Activated CD8-positive, alpha-beta T cell treated with anti-CD3 and anti-CD28 coated beads, Interleukin-2, amount 10 ng/mL, durations not matched to agents 7 days and 5 days (primary cell): ENCODE measurements at regions of chr14 and their contacts with region 1.

Region 1: DNA sequence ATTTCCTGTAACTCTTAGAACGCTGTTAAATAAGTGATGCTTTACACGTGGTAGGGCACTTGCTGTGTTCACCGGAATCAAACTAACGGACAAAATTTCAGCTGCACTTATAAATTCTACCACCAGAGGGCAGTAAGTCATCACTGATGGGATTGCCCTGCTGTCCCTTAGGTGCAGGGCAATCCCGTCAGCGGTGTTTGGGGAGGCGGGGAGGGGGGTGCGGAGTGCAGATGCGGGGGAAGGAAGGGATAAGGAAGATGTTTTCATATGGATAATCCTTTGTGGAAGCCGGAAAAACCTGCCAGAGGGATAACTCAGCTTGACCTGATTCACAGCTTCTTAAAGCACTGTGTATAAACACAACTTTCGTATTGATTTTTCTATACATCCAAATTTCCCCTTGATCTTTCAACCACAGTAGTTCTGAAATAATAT is 21.7 kb upstream of the SLC10A1 start:
- DNase-seq: peak; percentile 75
- ATAC-seq: peak; percentile 82
- H3K4me3 Mint-ChIP-seq: no peak overlapping the region
- H3K27ac Mint-ChIP-seq: no peak overlapping the region
- H3K4me1 Mint-ChIP-seq: peaks cover 3% of the 10 kb centered on the region
- H3K27me3 Mint-ChIP-seq: peaks cover 12% of the 10 kb centered on the region

Region 2: GRCh38 chr14:69794791-69795190 is 24.0 kb before region 1 on chr14:
- CTCF ChIA-PET with region 1: no interaction called
- POLR2A ChIA-PET with region 1: no interaction called
- DNase-seq: no peak
- ATAC-seq: no peak
- H3K4me3 Mint-ChIP-seq: no peak overlapping the region
- H3K27ac Mint-ChIP-seq: no peak overlapping the region
- H3K4me1 Mint-ChIP-seq: no peaks in the 10 kb centered on the region
- H3K27me3 Mint-ChIP-seq: no peaks in the 10 kb centered on the region

Region 3: GRCh38 chr14:69863083-69863482 is 44.3 kb after region 1 on chr14:
- CTCF ChIA-PET with region 1: no interaction called
- POLR2A ChIA-PET with region 1: no interaction called
- DNase-seq: no peak
- ATAC-seq: no peak
- H3K4me3 Mint-ChIP-seq: no peak overlapping the region
- H3K27ac Mint-ChIP-seq: no peak overlapping the region
- H3K4me1 Mint-ChIP-seq: no peaks in the 10 kb centered on the region
- H3K27me3 Mint-ChIP-seq: peaks cover 9% of the 10 kb centered on the region

Region 4: DNA sequence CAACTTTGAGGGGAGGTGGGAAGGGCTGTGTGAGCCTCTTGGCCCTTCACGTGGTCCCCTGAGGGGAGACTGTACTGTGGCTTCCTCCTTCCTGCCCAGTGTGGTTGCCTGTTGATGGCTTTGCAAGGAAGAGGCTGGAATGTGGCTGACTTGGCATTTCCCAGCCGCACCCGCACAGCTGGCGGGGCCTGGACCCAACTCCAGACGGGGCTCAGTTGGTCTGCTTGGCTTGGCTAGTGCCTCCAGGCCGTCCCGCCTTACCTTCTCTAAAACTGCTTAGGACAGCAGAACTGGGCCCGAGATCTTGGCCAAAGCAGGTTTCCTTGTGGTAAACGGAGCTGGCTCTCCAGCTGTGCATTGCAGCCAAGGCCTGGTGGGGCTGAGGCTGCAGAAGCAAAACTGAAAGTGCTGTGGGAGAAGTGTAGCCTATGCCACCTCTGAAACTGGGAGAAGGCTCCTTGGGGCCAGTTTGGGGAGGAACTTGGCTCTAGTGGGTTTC is 200.0 kb after region 1 on chr14:
- CTCF ChIA-PET with region 1: interaction called, 12 read pairs
- POLR2A ChIA-PET with region 1: no interaction called
- DNase-seq: peak; percentile 41
- ATAC-seq: peak; percentile 74
- H3K4me3 Mint-ChIP-seq: peak overlapping the region; percentile 6
- H3K27ac Mint-ChIP-seq: no peak overlapping the region
- H3K4me1 Mint-ChIP-seq: peaks cover 19% of the 10 kb centered on the region
- H3K27me3 Mint-ChIP-seq: peaks cover 15% of the 10 kb centered on the region

Region 5: DNA sequence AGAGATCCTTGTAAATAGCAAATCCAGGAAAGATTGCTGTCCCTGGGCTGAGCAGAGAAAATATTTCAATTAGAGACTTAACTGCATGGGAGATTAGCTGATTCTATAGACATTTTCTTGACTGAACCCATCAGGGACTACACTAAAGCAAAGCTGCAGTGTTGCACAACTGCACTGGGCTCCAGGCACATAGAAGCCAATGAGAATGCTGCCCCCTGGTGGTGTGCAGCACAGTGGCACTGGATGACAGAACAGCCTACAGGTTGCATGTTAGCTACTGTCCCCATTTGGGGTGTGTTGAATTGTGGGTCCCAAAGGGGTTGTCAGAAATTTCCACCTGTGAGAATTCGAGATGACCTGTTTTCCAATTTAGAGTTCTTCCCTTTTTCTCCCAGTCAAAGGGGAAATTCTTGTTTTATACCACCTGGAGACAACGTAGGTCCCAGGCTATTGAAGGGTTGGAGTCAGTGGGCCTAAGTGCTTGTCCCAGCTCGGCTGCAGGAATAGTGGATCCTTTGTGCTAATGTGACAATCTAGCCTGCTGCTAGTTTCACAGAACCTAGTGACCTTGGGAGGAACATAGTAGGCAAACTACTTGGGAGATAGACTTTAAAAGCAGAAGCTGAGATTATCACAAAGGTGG is 255.3 kb after region 1 on chr14:
- CTCF ChIA-PET with region 1: interaction called, 20 read pairs
- POLR2A ChIA-PET with region 1: no interaction called
- DNase-seq: peak; percentile 66
- ATAC-seq: peak; percentile 81
- H3K4me3 Mint-ChIP-seq: no peak overlapping the region
- H3K27ac Mint-ChIP-seq: no peak overlapping the region
- H3K4me1 Mint-ChIP-seq: no peaks in the 10 kb centered on the region
- H3K27me3 Mint-ChIP-seq: peaks cover 20% of the 10 kb centered on the region

Region 6: DNA sequence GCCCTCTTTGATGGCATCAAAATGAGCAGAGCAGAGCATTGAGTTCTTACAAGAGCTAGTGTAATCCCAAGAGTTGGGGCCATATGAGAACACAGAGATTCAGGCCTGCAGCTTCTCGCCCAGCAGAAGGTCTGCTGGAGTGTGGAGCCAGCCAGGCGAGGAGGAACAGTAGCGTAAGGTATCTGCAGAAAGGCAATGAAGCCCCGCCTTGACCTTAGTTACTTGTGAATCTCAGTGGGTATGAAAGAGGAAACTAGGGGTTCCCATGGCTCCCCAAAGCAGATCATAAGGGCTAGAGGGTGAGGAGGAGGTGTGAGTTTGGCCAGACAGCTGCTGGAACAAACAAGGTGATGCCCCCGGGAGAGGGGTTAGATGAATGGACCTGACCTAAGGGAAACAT is 320.6 kb after region 1 on chr14:
- CTCF ChIA-PET with region 1: no interaction called
- POLR2A ChIA-PET with region 1: no interaction called
- DNase-seq: no peak
- ATAC-seq: no peak
- H3K4me3 Mint-ChIP-seq: no peak overlapping the region
- H3K27ac Mint-ChIP-seq: no peak overlapping the region
- H3K4me1 Mint-ChIP-seq: peaks cover 3% of the 10 kb centered on the region
- H3K27me3 Mint-ChIP-seq: peaks cover 25% of the 10 kb centered on the region